Right cardiac atrium (tissue), 5 donors: ENCODE measurements at regions of chr16 and their contacts with region 1.

Region 1: GRCh38 chr16:19879241-19879792 is 5.3 kb downstream of the GPRC5B start:
- DNase-seq: peak in 2 of 3 donors; percentile 63 to 78
- ATAC-seq: no peak
- H3K4me3 ChIP-seq: no peak overlapping the region
- H3K27ac ChIP-seq: no peak overlapping the region
- H3K4me1 ChIP-seq: peaks cover 24% of the 10 kb centered on the region
- H3K27me3 ChIP-seq: no peaks in the 10 kb centered on the region

Region 2: GRCh38 chr16:19660432-19660831 is 218.9 kb before region 1 on chr16:
- intact Hi-C with region 1: loop called in 1 of 4 experiments (anchors 5 kb)
- DNase-seq: no peak
- ATAC-seq: no peak
- H3K4me3 ChIP-seq: no peak overlapping the region
- H3K27ac ChIP-seq: no peak overlapping the region
- H3K4me1 ChIP-seq: no peaks in the 10 kb centered on the region
- H3K27me3 ChIP-seq: no peaks in the 10 kb centered on the region

Region 3: DNA sequence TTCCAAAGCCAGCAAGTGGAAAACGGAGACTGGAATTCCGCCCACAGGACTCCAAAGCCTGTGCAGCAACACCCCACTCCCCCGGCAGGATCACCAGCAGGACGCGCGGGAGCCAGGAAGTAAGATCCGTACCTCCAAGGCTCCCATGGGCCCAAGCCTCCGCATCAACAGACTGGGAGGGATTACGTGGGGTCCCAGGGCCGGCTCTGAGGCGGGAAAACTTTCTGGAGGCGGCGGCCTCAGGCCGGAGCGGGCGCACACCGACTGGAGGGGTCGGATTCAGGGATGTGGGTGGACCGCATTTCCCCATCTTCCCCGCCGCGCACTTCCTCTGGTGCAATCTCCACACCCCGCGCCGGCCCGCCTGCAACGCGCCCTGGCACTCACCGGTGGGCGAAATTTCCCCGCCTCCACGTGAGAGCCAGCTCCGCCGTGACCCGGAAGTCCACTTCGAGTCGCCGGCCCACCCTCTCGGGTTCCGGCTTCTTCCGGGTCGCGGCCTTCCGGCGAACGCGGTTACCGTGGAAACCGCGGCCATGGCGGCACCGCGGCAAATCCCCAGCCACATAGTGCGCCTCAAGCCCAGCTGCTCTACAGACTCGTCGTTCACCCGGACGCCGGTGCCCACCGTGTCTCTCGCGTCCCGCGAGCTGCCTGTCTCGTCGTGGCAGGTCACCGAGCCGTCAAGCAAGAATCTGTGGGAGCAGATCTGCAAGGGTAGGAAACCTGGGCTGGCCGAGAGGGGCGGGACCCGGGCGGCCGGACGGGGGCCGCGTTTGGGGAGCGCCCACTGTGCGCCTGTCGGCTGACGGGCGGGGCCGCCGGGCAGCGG is 161.3 kb before region 1 on chr16 and contains the starts of genes IQCK and KNOP1:
- intact Hi-C with region 1: loop called in 2 of 4 experiments (anchors 5 to 10 kb)
- DNase-seq: peak; percentile 93 to 97 (median 96)
- ATAC-seq: peak; percentile 97
- H3K4me3 ChIP-seq: peak within 1 kb of the TSS; percentile 68
- H3K27ac ChIP-seq: peak within 1 kb of the TSS; percentile 59
- H3K4me1 ChIP-seq: peaks cover 4% of the 10 kb centered on the region
- H3K27me3 ChIP-seq: no peaks in the 10 kb centered on the region
- total RNA-seq, gene IQCK: 5.1 to 8.3 (median 6.4) TPM
- total RNA-seq, gene KNOP1: 6.1 to 9.2 (median 7.9) TPM

Region 4: GRCh38 chr16:19898924-19899604 is 19.7 kb after region 1 on chr16:
- intact Hi-C with region 1: no loop called
- DNase-seq: no peak
- ATAC-seq: peak in 1 of 2 donors; percentile 57
- H3K4me3 ChIP-seq: no peak overlapping the region
- H3K27ac ChIP-seq: no peak overlapping the region
- H3K4me1 ChIP-seq: no peaks in the 10 kb centered on the region
- H3K27me3 ChIP-seq: no peaks in the 10 kb centered on the region

Region 5: GRCh38 chr16:19991614-19992013 is 112.3 kb after region 1 on chr16:
- intact Hi-C with region 1: no loop called
- DNase-seq: no peak
- ATAC-seq: no peak
- H3K4me3 ChIP-seq: no peak overlapping the region
- H3K27ac ChIP-seq: no peak overlapping the region
- H3K4me1 ChIP-seq: no peaks in the 10 kb centered on the region
- H3K27me3 ChIP-seq: no peaks in the 10 kb centered on the region